Panc1 (cell line): ENCODE measurements at regions of chr1 and their contacts with region 1.

Region 1: GRCh38 chr1:164786980-164787833 is 228.2 kb downstream of the PBX1 start:
- DNase-seq: peak; percentile 24
- ATAC-seq: peak; percentile 98
- H3K4me3 ChIP-seq: no peak overlapping the region
- H3K27ac ChIP-seq: no peak overlapping the region
- H3K4me1 ChIP-seq: no peaks in the 10 kb centered on the region
- H3K27me3 ChIP-seq: no peaks in the 10 kb centered on the region
- CTCF ChIP-seq: peak; percentile 92

Region 2: DNA sequence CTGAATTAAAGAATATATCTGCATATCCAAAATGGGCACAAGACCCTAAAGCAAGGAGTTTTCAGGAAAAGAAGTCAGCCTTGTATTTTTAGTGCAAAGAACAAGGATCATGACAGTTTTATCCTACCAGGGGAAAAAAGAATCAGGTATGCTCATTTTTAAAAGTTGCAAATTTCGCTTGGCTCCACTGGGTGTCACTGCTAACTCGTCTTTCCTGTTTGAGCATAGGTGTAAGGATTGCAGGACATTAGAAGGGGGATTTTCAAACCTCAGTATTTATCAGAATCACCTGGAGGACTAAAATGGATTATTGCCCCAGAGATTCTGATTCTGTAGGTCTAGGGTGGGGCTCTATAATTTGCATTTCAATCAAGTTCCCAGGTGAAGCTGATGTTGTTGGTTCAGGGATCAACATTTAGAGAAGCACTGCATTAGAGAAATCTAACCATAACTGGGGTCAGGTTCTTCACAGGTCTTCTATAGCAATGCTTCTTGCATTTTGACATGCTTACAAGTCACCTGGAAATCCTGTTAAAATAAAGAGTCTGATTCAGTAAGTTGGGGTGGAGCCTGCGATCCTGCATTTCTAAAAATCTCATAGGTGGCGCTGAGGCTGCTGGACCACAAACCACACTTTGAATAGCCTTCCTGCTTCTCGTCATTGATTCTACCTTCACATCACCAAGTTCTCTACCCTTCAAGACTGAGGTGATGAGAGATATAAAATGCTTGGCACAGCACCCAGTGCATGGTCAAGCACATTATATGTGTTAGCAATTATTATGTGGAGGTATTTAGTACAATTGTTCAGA is 1425.9 kb before region 1 on chr1:
- CTCF ChIA-PET with region 1: no interaction called
- POLR2A ChIA-PET with region 1: no interaction called
- in situ Hi-C with region 1: no loop called
- intact Hi-C with region 1: loop called (anchors 1 kb)
- DNase-seq: no peak
- ATAC-seq: peak; percentile 84
- H3K4me3 ChIP-seq: no peak overlapping the region
- H3K27ac ChIP-seq: no peak overlapping the region
- H3K4me1 ChIP-seq: no peaks in the 10 kb centered on the region
- H3K27me3 ChIP-seq: no peaks in the 10 kb centered on the region; the same call in 1 of the 2 replicates
- CTCF ChIP-seq: peak; percentile 71

Region 3: GRCh38 chr1:163410073-163410999 is 1376.9 kb before region 1 on chr1:
- CTCF ChIA-PET with region 1: no interaction called
- POLR2A ChIA-PET with region 1: no interaction called
- in situ Hi-C with region 1: loop called (anchors 25 kb)
- intact Hi-C with region 1: loop called (anchors 5 kb)
- DNase-seq: peak; percentile 22
- ATAC-seq: peak; percentile 54; the same call in 1 of the 2 replicates
- H3K4me3 ChIP-seq: no peak overlapping the region
- H3K27ac ChIP-seq: no peak overlapping the region
- H3K4me1 ChIP-seq: no peaks in the 10 kb centered on the region
- H3K27me3 ChIP-seq: no peaks in the 10 kb centered on the region
- CTCF ChIP-seq: peak; percentile 81

Region 4: DNA sequence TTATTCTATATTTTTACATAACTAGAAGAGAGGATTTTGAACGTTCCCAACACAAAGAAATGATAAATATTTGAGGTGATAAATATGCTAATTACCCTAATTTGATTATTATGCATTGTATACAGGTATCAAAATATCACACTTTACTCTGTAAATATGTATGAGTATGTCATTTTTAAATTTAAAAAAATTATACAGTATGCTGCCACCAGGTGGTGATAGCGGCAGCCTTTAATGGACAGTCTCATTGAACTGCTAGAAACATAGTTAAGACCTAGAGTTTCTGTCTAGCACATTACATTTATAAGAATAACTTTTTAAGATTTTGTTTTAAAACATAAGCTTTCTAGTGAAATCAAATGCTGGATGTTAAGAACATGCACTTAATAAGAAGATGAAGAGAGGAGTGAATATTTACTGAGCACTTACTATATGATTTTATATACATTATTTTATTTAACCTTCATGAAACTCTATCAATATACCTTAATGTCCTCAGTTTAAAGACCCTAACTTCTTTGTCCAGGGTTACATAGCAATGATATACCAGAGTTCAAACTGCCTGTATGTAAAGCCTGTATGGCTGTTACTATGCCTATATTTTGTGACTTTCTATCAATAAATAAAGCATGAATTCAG is 1258.4 kb before region 1 on chr1:
- CTCF ChIA-PET with region 1: no interaction called
- POLR2A ChIA-PET with region 1: no interaction called
- in situ Hi-C with region 1: no loop called
- intact Hi-C with region 1: loop called (anchors 5 kb)
- DNase-seq: peak; percentile 10
- ATAC-seq: no peak; the same call in 1 of the 2 replicates
- H3K4me3 ChIP-seq: no peak overlapping the region
- H3K27ac ChIP-seq: no peak overlapping the region
- H3K4me1 ChIP-seq: no peaks in the 10 kb centered on the region
- H3K27me3 ChIP-seq: no peaks in the 10 kb centered on the region
- CTCF ChIP-seq: peak; percentile 65; the same call in 1 of the 2 replicates

Region 5: DNA sequence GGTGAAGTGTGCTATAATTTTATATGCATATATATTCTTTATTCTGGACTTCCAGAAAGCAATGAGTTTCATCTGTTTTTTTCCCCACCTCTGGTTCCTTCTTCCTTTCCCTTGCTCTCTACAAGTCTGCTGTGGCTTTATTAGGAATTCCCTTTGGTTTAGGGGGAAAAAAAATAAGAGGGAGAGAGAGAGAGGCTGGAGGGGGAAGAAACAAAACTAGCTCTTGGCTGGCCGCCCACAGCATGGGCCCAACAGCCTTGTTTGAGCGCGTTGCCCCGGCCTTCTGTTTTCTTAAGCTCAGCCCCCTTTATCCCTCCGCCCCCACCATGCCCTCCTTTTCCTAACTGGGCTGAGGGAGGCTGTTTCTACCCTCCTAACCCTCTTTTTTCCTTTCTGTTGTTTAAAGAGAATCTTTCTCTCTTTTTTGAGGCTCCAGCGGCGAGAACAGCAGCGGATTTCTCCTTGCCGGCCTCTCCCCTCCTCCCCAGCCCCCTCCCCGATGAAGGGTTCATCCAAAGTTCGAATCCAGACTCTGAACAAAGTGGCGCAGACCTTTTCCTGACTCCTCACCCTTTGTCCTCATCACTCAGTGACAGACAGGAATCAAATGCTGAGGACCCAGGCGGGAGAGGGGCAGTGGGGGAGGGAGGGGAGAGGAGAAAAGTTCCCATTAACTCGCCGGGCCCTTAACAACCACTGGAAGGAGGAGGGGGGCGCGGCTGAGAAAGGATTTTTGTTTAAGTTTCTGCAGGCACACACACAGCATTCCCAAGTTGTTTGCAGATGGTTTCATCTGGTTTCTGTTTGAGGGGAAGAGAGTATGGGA is 198.5 kb before region 1 on chr1:
- CTCF ChIA-PET with region 1: no interaction called
- POLR2A ChIA-PET with region 1: no interaction called
- in situ Hi-C with region 1: no loop called
- intact Hi-C with region 1: no loop called
- DNase-seq: no peak
- ATAC-seq: no peak
- H3K4me3 ChIP-seq: no peak overlapping the region
- H3K27ac ChIP-seq: no peak overlapping the region
- H3K4me1 ChIP-seq: no peaks in the 10 kb centered on the region
- H3K27me3 ChIP-seq: no peaks in the 10 kb centered on the region; the same call in 1 of the 2 replicates
- CTCF ChIP-seq: no peak

Region 6: DNA sequence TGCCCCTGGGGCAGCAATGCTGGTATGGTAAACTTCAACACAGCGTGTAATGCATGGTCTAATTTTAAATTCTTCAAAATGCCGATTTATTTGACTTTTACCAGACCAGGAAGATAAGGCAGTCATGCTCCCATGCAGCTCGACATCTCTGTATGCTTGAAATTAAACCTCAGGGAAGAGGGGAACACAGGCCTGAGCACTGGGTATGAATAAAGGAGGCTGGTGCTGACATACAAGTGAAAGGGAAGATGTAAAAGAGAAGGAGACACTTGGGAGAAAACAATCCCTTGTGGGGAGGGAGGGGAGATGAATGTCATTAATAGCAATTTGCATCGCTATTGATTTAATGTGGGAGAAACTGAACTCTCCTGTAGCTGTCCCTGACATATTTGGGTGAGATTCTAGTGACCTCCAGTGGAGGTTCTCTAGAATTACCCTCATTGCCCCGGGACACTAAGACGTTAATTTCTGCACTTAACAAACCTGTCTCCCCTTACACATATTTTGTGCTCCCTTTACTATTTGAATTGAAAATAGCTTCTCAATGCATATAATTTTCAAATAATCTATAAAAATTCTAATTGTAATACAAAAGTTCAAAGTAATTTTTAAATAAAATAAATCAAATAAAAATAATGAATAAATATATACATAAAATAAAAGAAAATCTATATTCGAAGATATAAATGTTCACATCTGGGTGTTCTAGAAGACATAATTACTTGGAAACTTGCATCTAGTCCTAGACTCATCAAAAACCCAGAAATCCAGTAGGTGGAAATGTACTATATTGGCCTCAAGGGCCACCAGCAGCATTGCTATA is 286.2 kb after region 1 on chr1:
- CTCF ChIA-PET with region 1: no interaction called
- POLR2A ChIA-PET with region 1: no interaction called
- in situ Hi-C with region 1: no loop called
- intact Hi-C with region 1: loop called (anchors 5 kb)
- DNase-seq: peak; percentile 17
- ATAC-seq: peak; percentile 81
- H3K4me3 ChIP-seq: no peak overlapping the region
- H3K27ac ChIP-seq: no peak overlapping the region
- H3K4me1 ChIP-seq: no peaks in the 10 kb centered on the region
- H3K27me3 ChIP-seq: no peaks in the 10 kb centered on the region; the same call in 1 of the 2 replicates
- CTCF ChIP-seq: peak; percentile 78